Esophagus muscularis mucosa (tissue), 4 donors: ENCODE measurements at regions of chr9 and their contacts with region 1.

Region 1: DNA sequence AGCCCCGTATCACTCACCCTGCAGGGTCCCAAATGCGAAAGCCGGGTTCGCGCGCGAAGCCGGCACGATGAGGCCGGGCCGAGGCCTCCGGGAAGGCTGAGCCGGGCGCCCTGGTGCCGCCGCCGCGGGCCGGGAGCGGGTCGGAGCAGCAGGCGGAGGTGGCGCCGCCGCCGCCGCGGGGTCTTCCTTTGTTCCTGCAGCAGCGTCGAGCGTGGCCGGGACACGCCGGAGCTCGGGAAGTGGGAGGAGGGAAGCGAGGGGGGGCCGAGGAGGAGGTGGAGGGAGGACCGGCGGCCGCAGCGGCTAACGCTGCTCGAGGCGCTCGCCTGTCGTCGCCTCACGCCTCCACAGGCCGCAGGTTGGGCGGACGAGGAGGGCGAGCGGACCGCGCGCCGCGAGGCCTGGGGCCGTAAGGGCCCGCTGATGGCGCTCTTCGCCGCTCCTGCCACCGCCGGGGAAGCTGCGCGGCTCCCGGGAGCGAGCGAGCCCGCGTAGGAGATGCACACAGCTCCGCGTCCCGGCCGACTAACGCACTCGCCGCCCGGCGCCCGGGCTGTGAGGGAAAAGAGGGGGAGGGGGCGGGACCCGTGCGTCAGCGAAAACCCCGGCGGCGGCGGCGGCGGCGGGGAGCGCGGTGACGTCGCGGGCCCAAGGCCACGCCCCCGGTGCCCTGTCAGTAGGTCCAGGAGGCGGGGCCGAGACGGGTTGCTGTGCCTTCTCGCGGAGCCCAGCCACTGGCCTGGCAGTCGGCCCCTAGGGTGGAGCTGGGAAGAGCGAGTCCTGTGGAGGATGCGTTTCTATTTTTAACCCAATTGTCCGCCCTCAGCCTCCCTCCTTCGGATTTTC is at the start of gene ZFAND5:
- DNase-seq: peak; percentile 100
- H3K4me3 ChIP-seq: peak within 1 kb of the TSS; percentile 78 to 94 (median 93)
- H3K27ac ChIP-seq: peak within 1 kb of the TSS; percentile 99 to 100 (median 100)
- H3K4me1 ChIP-seq: peaks cover 20 to 32% (median 24%) of the 10 kb centered on the region in 4 donors
- H3K27me3 ChIP-seq: no peaks in the 10 kb centered on the region
- CTCF ChIP-seq: peak in 1 of 3 experiments; percentile 10
- EP300 ChIP-seq: peak; percentile 88
- POLR2A ChIP-seq: peak; percentile 99
- total RNA-seq, gene ZFAND5: 176 to 303 (median 225) TPM

Region 2: GRCh38 chr9:70413798-70414775 is 1950.8 kb before region 1 on chr9 and contains the start of gene KLF9:
- intact Hi-C with region 1: loop called (anchors 10 kb)
- DNase-seq: peak; percentile 99
- H3K4me3 ChIP-seq: peak within 1 kb of the TSS; percentile 66 to 99 (median 89)
- H3K27ac ChIP-seq: peak within 1 kb of the TSS; percentile 91 to 100 (median 100)
- H3K4me1 ChIP-seq: peaks cover 44 to 55% (median 47%) of the 10 kb centered on the region in 4 donors
- H3K27me3 ChIP-seq: no peaks in the 10 kb centered on the region
- CTCF ChIP-seq: peak in 1 of 3 experiments; percentile 3
- EP300 ChIP-seq: no peak
- POLR2A ChIP-seq: peak; percentile 90
- total RNA-seq, gene KLF9: 143 to 209 (median 184) TPM

Region 3: DNA sequence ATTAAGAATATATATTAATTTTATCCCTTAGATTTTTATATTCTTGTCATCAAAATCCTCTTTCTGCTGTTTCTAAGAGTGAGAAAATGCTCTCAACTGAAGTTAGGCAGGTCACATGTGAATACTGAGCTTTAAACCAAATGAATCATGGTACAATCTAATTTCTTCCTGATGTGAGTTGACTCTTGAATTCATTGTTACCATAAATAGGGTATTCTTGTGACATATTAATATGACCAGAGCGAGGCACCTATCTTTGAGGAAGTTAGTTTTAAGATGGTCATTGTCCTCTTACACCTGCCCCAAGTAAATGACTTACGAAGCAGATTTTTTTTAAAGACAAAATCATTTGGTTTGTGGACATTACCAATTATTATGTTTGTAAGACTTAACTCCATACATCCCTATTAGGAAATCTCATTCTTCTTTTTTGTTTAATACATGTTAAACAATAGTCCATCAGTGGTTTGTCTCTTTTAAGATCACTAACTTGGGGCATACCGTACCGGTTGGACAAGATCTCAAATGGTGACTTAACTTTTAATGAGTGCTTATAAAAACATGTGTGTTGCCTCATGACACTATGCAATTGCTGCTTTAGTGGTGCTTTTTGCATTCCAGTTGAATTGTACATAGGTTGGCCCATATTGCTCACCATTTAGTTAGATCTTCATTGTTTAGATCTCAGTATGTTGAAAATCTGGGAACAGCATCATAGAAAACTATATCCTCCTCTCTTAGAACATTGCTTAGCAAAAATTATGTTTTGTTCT is 435.9 kb before region 1 on chr9:
- intact Hi-C with region 1: no loop called
- DNase-seq: no peak
- H3K4me3 ChIP-seq: no peak overlapping the region
- H3K27ac ChIP-seq: no peak overlapping the region
- H3K4me1 ChIP-seq: no peaks in the 10 kb centered on the region
- H3K27me3 ChIP-seq: no peaks in the 10 kb centered on the region
- CTCF ChIP-seq: no peak
- EP300 ChIP-seq: no peak
- POLR2A ChIP-seq: no peak

Region 4: GRCh38 chr9:72577212-72577753 is 212.4 kb after region 1 on chr9:
- intact Hi-C with region 1: loop called (anchors 5 kb)
- DNase-seq: no peak
- H3K4me3 ChIP-seq: peak overlapping the region in 2 of 4 donors; percentile 5 to 29
- H3K27ac ChIP-seq: peak overlapping the region; percentile 59 to 72 (median 65)
- H3K4me1 ChIP-seq: peaks cover 15 to 39% (median 35%) of the 10 kb centered on the region in 4 donors
- H3K27me3 ChIP-seq: no peaks in the 10 kb centered on the region
- CTCF ChIP-seq: no peak
- EP300 ChIP-seq: no peak
- POLR2A ChIP-seq: no peak

Region 5: DNA sequence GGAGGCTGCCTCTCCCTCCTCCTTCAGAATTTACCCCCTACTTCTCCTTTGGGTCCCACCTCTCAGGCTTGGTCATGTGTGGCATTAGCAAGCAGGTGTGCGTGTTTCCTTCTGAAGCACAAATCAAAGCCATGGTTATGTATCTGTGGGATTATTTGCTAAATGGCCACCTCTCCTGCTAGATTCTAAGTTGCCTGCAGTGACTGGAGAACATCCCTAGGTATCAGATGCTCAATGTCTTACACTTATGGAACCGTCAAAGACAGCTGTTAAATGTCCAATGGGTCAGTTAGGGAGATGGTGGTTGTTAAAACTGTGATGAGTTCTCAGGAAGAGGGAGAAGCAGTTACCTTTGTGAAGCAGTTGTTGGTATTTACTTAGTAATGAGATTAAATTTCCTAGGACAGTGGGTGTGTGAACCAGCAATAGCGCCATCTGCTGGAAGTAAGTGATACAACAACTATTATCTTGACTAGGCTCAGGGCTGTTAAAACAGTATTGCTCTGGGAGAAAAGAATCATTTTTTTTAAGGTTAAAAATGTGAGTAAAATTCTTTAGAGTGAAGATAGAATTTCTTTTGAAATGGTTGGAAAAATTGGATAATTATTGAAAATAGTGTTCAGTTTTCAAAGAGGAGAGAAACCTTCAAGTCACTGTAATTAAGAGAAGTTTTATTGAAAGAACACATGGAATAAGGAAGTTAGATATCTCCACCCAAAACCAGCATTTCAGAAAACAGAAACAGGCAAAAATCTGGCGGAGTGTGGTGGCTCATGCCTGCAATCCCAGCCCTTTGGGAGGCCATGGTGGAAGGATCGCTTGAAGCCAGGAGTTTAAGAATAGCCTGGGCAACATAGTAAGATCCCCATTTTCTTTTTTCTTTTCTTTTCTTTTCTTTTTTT is 227.9 kb after region 1 on chr9:
- intact Hi-C with region 1: loop called (anchors 5 kb)
- DNase-seq: no peak
- H3K4me3 ChIP-seq: no peak overlapping the region
- H3K27ac ChIP-seq: no peak overlapping the region
- H3K4me1 ChIP-seq: peaks cover 7 to 24% (median 21%) of the 10 kb centered on the region in 4 donors
- H3K27me3 ChIP-seq: no peaks in the 10 kb centered on the region
- CTCF ChIP-seq: peak; percentile 77 to 84 (median 83)
- EP300 ChIP-seq: no peak
- POLR2A ChIP-seq: no peak

Region 6: DNA sequence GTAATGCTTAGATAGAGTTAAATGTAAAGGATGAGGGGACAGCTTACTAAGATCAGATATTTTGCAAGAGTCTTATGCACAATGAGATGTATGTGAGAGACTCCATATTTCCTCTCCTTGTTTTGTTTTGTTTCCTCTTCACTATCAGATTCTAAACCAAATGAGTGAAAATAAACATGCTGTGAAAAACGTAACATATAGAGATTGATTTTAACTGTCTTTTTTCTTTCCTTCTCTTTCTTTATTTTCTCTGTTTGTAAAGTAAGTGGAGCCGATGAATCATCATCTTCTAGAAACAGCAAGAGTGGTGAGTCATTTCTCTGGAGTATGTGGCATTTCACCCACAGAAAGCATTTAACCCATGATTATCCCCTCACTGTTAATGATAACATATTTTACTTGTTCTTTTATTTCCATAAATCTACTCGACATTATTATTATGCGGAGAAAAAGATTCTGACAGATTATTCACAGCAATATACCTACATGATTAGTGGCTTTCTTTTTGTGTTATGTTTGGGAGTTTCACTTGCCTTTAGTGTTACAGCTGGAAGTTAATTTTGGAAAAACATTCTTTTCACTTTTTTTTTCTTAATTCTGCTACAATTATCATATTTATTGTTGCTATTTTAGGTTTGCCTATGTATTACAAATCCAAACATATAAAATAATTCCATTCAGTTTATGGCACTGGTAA is 784.6 kb after region 1 on chr9:
- intact Hi-C with region 1: loop called (anchors 10 kb)
- DNase-seq: no peak
- H3K4me3 ChIP-seq: peak overlapping the region; percentile 5 to 23 (median 20)
- H3K27ac ChIP-seq: peak overlapping the region; percentile 28 to 70 (median 66)
- H3K4me1 ChIP-seq: peaks cover 11 to 50% (median 45%) of the 10 kb centered on the region in 4 donors
- H3K27me3 ChIP-seq: no peaks in the 10 kb centered on the region
- CTCF ChIP-seq: no peak
- EP300 ChIP-seq: no peak
- POLR2A ChIP-seq: no peak